Activated B cell treated with CpG ODN at 0.5 μM for 24 hours (primary cell): ENCODE measurements at regions of chr3 and their contacts with region 1.

Region 1: DNA sequence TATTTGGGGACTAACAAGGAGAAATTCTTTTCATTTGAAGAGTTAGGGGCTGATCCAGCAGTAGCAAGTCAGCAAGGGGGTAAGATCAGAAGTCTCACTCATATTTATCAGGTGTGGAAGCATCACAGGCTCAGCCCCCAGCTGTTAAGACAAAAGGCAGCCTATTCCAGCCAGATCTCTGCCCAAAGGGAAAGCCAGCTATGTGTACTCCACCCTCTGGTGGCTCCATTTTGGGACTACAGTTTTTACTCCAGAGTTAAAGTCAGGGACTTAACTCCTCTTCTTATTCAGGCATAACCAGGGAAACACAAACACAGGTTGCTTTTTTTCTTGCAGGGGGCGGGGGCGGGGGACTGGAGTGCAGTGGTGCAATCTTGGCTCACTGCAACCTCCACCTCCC is 19.2 kb downstream of the UBP1 start:
- DNase-seq: no peak
- ATAC-seq: no peak
- H3K4me3 Mint-ChIP-seq: no peak overlapping the region
- H3K27ac Mint-ChIP-seq: peak overlapping the region; percentile 56
- H3K4me1 Mint-ChIP-seq: peaks cover 13% of the 10 kb centered on the region
- H3K27me3 Mint-ChIP-seq: no peaks in the 10 kb centered on the region
- CTCF ChIP-seq: no peak

Region 2: DNA sequence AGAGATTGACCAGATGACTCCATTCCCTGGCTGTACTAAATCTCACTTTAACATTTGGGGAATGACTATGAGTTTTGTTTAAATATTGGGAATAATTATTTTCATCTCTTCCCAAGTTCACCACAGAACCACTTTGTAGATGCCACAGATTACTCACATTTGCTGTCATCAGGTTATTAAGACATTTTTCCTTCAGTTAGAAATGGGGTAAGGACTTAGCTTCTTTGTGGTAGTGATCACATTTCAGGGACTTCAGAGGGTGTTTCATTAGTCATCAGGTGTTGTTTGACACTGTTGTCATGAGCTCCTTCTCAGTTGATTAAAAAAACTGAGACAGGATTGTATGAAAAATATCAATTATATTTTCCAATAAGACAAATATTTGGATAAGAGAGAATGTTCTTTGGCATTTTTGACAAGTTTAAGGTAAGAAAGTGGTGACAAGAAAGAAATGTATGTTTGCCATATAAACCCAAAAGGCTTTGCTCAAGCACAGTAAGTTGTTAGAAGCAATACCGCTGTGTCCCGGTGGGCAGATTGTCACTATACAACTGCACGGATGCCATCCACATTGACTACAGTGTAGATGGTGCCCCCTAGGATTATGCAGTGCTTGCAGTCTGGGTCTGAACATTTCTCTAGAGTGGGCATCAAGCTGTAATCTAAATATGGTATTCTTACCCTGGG is 121.4 kb before region 1 on chr3:
- CTCF ChIA-PET with region 1: no interaction called
- POLR2A ChIA-PET with region 1: interaction called, 13 read pairs
- intact Hi-C with region 1: no loop called
- DNase-seq: no peak
- ATAC-seq: no peak
- H3K4me3 Mint-ChIP-seq: no peak overlapping the region
- H3K27ac Mint-ChIP-seq: no peak overlapping the region
- H3K4me1 Mint-ChIP-seq: no peaks in the 10 kb centered on the region
- H3K27me3 Mint-ChIP-seq: peaks cover 3% of the 10 kb centered on the region
- CTCF ChIP-seq: no peak